Aorta (tissue), 5 donors: ENCODE measurements at regions of chr11 and their contacts with region 1.

Region 1: GRCh38 chr11:47466701-47467250 is 17.8 kb upstream of the RAPSN start:
- DNase-seq: peak; percentile 41 to 71
- ATAC-seq: peak; percentile 59
- H3K4me3 ChIP-seq: no peak overlapping the region
- H3K27ac ChIP-seq: peak overlapping the region in 1 of 2 donors; percentile 5
- H3K4me1 ChIP-seq: no peaks in the 10 kb centered on the region
- H3K27me3 ChIP-seq: no peaks in the 10 kb centered on the region

Region 2: GRCh38 chr11:47426061-47426956 is 40.5 kb before region 1 on chr11 and contains the start of gene PSMC3:
- intact Hi-C with region 1: no loop called
- DNase-seq: peak; percentile 99 to 100
- ATAC-seq: peak; percentile 98
- H3K4me3 ChIP-seq: peak within 1 kb of the TSS; percentile 83 to 94
- H3K27ac ChIP-seq: peak within 1 kb of the TSS; percentile 19 to 76
- H3K4me1 ChIP-seq: no peaks in the 10 kb centered on the region
- H3K27me3 ChIP-seq: no peaks in the 10 kb centered on the region
- total RNA-seq, gene PSMC3: 84.2 to 117 TPM

Region 3: DNA sequence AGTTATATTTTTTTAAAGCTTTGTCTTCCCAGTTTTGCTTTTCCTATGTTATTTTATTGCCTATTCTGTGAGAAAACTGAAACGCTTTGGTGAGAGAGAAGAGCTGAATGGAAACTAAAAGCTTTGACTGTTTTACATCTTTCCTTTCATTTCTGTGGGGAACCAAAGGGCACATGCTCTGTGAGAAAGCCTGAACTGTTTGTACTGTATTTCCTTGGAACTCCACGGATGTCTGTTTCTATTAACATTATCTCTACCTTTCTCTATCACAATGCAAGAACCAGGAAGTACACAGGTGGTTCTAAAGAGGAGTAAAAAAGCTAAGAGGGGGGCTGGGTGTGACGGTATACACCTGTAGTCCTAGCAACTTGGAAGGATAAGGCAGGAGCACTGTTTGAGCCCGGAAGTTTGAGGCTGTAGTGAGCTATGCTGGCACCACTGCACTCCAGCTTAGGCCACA is 42.3 kb after region 1 on chr11:
- intact Hi-C with region 1: loop called in 1 of 2 experiments (anchors 5 kb)
- DNase-seq: no peak
- ATAC-seq: no peak
- H3K4me3 ChIP-seq: no peak overlapping the region
- H3K27ac ChIP-seq: no peak overlapping the region
- H3K4me1 ChIP-seq: peaks cover 4 to 12% of the 10 kb centered on the region in 2 donors
- H3K27me3 ChIP-seq: no peaks in the 10 kb centered on the region

Region 4: DNA sequence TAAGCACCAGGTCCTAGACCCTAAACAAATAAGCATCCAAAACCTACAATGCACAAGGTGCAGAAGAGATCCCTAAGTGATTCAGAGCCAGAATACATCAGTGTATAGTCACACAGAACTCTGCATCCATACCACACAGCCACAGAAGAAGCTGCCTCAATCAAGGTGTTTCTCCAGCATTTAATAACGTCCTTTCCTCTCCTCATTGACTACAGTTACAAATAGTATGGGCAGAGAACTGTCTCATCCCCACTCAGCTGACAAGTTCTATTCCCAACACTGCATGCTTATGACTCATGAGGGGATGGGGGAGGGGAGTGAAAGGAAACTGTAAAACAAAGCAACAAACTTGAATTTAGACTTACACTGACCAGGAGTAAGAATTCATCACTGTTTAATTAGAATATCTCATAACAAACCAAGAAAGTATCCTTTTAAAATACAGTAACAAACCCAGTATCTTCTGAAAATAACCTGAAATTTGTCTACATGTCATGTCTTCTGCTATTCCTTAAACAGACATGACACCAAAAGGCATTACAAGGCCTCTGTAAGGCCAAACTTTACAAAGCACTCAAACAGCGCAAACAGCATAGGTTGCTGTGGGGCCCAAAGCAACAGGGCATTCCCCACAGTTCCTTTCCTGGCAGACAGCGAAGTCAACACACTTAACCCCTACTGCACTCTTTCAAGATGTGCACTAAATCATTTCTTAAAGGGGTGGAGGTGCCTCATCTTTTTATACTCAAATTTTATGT is 56.9 kb after region 1 on chr11:
- intact Hi-C with region 1: loop called in 1 of 2 experiments (anchors 5 kb)
- DNase-seq: no peak
- ATAC-seq: peak; percentile 88
- H3K4me3 ChIP-seq: no peak overlapping the region
- H3K27ac ChIP-seq: peak overlapping the region; percentile 64 to 89
- H3K4me1 ChIP-seq: peaks cover 7 to 9% of the 10 kb centered on the region in 2 donors
- H3K27me3 ChIP-seq: no peaks in the 10 kb centered on the region